ENCODE measurements at regions of chr14 and their contacts with region 1.

Region 1: GRCh38 chr14:98035396-98035795 is 1236.6 kb downstream of the BCL11B start:
- DNase-seq: no peak
- H3K27ac ChIP-seq: no peak overlapping the region
- CTCF ChIP-seq: no peak

Region 2: DNA sequence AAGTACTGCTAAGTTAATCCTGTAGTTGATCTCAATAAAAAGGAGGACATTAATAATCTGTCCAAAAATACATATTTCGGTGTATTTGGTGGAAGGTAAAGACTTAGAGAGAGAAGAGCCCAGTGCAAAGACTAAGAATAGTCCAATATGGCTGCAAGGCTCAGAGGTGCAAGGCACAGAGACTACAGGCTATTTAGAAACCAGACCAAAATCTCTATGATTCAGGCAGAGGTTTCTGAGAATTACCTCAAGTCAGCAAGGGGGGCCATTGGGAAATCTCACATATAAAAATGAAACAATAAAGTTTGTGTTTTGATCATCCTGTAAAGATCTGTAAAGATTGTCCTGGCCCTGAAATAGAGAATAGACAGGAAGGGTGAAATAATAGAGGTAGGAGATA is 65.2 kb before region 1 on chr14:
- CTCF ChIA-PET with region 1: interaction called, 10 read pairs
- POLR2A ChIA-PET with region 1: no interaction called
- DNase-seq: no peak
- H3K27ac ChIP-seq: no peak overlapping the region
- CTCF ChIP-seq: no peak

Region 3: GRCh38 chr14:98056946-98057345 is 21.6 kb after region 1 on chr14:
- CTCF ChIA-PET with region 1: no interaction called
- POLR2A ChIA-PET with region 1: no interaction called
- DNase-seq: no peak
- H3K27ac ChIP-seq: no peak overlapping the region
- CTCF ChIP-seq: no peak

Measured in RWPE1 (cell line).